HepG2 (cell line): ENCODE measurements at regions of chr2 and their contacts with region 1.

Region 1: DNA sequence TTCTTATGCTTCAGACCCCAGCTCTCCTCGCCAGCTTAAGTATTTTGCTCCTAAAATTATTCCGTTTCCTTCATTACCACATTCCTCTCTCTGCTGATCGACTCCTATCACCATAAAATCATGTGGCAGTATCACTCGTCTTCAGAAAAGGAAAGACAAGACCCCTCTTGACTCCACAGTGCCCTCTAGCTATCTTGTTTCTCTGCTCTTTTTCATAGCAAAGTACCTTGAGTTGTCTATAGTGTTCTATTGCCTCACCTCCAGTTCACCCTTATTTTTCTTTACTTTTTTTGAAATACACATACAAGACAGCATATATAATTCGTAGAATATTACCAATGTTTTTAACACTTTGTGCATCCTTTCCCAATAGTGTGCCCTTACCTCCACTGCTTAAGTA is 273.2 kb upstream of the SIX3 start:
- DNase-seq: peak; percentile 18
- ATAC-seq: peak; percentile 47; the same call in 2 of the 3 replicates
- H3K4me3 ChIP-seq: no peak overlapping the region
- H3K27ac ChIP-seq: no peak overlapping the region
- H3K4me1 ChIP-seq: no peaks in the 10 kb centered on the region
- H3K27me3 ChIP-seq: no peaks in the 10 kb centered on the region
- CTCF ChIP-seq: peak; percentile 50
- EP300 ChIP-seq: no peak
- POLR2A ChIP-seq: no peak
- RAD21 ChIP-seq: no peak

Region 2: DNA sequence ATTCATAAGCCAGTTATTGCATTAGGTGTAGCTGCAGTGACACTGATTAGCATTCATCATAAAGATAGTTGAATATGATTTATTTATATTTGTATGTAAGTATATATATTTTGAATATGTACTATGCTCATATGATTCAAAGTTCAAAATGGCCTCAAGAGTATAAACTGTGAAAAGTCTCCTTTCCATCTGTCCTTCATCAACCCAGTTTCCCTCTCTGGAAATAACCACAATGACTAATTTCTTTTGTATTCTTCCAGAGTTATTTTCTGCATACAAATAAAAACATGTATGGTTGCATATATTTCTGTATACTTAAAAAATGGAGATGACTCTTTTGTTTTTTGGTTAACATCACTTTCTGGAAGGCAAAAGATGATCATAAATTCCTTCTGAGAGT is 211.4 kb before region 1 on chr2:
- CTCF ChIA-PET with region 1: no interaction called
- POLR2A ChIA-PET with region 1: no interaction called
- in situ Hi-C with region 1: no loop called
- intact Hi-C with region 1: no loop called
- DNase-seq: no peak
- ATAC-seq: no peak
- H3K4me3 ChIP-seq: no peak overlapping the region
- H3K27ac ChIP-seq: no peak overlapping the region
- H3K4me1 ChIP-seq: peaks cover 11% of the 10 kb centered on the region; the same call in 1 of the 2 replicates
- H3K27me3 ChIP-seq: no peaks in the 10 kb centered on the region; a peak in 1 of 5 replicates
- CTCF ChIP-seq: no peak
- EP300 ChIP-seq: no peak
- POLR2A ChIP-seq: no peak
- RAD21 ChIP-seq: no peak

Region 3: GRCh38 chr2:44479122-44479887 is 189.0 kb before region 1 on chr2:
- CTCF ChIA-PET with region 1: interaction called, 12 read pairs
- POLR2A ChIA-PET with region 1: no interaction called
- in situ Hi-C with region 1: no loop called
- intact Hi-C with region 1: loop called (anchors 1 kb)
- DNase-seq: peak; percentile 89
- ATAC-seq: peak; percentile 99
- H3K4me3 ChIP-seq: no peak overlapping the region
- H3K27ac ChIP-seq: no peak overlapping the region
- H3K4me1 ChIP-seq: no peaks in the 10 kb centered on the region
- H3K27me3 ChIP-seq: no peaks in the 10 kb centered on the region
- CTCF ChIP-seq: peak; percentile 99
- EP300 ChIP-seq: no peak
- POLR2A ChIP-seq: no peak
- RAD21 ChIP-seq: peak; percentile 93